GM12878 (cell line): ENCODE measurements at regions of chr20 and their contacts with region 1.

Region 1: GRCh38 chr20:44966030-44966961 is at the start of gene STK4:
- DNase-seq: peak; percentile 90
- ATAC-seq: peak; percentile 79
- H3K4me3 ChIP-seq: peak within 1 kb of the TSS; percentile 95
- H3K27ac ChIP-seq: peak within 1 kb of the TSS; percentile 95
- H3K4me1 ChIP-seq: peaks cover 13% of the 10 kb centered on the region
- H3K27me3 ChIP-seq: no peaks in the 10 kb centered on the region
- CTCF ChIP-seq: peak; percentile 50 to 74 (median 59)
- EP300 ChIP-seq: no peak; a peak in 1 of 4 replicates
- POLR2A ChIP-seq: peak; percentile 95
- RAD21 ChIP-seq: peak; percentile 45
- polyA plus RNA-seq, gene STK4: 24.0 to 51.4 TPM

Region 2: DNA sequence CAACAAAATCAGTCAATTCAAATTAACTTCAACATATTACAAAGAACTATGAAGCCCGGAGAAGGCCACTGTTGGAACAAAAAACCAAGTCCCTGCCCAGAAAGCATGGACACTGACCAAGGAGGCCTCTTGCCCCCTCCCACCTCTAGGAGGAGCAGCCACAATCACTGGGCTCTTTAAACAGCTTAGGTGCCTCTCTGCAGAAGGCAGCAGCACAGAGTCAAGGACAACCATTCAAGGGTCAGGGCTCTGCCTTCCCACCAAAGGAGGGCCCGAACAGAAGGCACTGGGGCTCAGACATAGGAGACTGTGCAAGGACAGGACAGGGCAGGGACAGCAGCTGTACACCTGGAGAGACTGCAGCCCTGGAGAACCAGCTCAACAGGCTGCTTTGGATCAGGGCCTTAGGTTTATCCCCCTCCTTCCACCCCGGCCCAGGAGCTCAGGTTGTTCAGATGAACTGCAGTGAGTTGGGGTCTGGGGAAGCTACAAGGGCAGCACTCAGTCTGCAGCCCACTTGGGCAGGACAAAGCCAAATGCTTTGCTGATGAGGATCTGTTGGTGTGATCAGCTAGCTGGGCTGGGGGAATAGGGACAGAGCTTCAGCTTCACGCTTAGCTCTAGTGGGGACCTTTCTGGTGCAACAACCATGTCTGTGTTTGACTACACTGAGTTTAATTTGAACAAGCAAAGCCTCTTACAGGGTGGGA is 23.9 kb before region 1 on chr20:
- CTCF ChIA-PET with region 1: no interaction called
- POLR2A ChIA-PET with region 1: no interaction called
- RAD21 ChIA-PET with region 1: no interaction called
- SMC1A ChIA-PET with region 1: no interaction called
- in situ Hi-C with region 1: no loop called
- intact Hi-C with region 1: no loop called
- DNase-seq: no peak
- ATAC-seq: no peak
- H3K4me3 ChIP-seq: no peak overlapping the region
- H3K27ac ChIP-seq: no peak overlapping the region
- H3K4me1 ChIP-seq: no peaks in the 10 kb centered on the region
- H3K27me3 ChIP-seq: no peaks in the 10 kb centered on the region
- CTCF ChIP-seq: no peak
- EP300 ChIP-seq: no peak
- POLR2A ChIP-seq: no peak
- RAD21 ChIP-seq: 0 out of 2 replicates have a peak, but pooled peaks have one; percentile 6

Region 3: DNA sequence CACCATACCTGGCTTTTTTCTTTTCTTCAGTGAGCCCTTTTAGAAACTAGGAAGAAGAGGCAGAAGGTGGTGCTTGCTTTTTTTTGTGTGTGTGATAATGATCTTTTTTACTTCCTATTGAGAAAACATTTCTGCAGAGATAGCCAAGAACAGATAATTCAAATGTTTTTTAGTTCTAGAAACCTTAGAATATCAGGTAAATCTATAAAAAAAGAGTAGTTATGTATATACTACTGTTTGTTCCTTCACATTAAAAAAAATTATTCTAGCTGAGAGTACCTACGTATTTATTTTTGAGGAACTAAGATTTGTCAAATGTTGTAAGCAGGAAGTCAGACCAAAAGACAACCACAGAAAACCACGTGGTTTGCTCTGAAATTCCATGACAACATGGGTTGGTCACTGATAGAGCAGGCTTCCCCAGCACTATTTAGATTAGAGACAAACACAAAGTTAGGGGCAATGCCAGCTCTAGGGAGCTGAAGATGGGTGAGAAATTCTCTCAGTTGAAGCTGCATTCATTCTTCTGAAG is 12.9 kb after region 1 on chr20:
- CTCF ChIA-PET with region 1: interaction called, 21 read pairs
- POLR2A ChIA-PET with region 1: interaction called, 48 read pairs
- RAD21 ChIA-PET with region 1: interaction called, 24 read pairs
- SMC1A ChIA-PET with region 1: interaction called, 66 read pairs
- in situ Hi-C with region 1: no loop called
- intact Hi-C with region 1: no loop called
- DNase-seq: peak; percentile 82
- ATAC-seq: peak; percentile 95
- H3K4me3 ChIP-seq: 0 out of 2 replicates have a peak overlapping the region, but pooled peaks have one; percentile 27
- H3K27ac ChIP-seq: peak overlapping the region; percentile 89
- H3K4me1 ChIP-seq: peaks cover 17% of the 10 kb centered on the region
- H3K27me3 ChIP-seq: no peaks in the 10 kb centered on the region
- CTCF ChIP-seq: no peak
- EP300 ChIP-seq: peak; percentile 65 to 66; a peak in 3 of 4 replicates
- POLR2A ChIP-seq: no peak
- RAD21 ChIP-seq: no peak